ENCODE measurements at regions of chr2 and their contacts with region 1.

Region 1: DNA sequence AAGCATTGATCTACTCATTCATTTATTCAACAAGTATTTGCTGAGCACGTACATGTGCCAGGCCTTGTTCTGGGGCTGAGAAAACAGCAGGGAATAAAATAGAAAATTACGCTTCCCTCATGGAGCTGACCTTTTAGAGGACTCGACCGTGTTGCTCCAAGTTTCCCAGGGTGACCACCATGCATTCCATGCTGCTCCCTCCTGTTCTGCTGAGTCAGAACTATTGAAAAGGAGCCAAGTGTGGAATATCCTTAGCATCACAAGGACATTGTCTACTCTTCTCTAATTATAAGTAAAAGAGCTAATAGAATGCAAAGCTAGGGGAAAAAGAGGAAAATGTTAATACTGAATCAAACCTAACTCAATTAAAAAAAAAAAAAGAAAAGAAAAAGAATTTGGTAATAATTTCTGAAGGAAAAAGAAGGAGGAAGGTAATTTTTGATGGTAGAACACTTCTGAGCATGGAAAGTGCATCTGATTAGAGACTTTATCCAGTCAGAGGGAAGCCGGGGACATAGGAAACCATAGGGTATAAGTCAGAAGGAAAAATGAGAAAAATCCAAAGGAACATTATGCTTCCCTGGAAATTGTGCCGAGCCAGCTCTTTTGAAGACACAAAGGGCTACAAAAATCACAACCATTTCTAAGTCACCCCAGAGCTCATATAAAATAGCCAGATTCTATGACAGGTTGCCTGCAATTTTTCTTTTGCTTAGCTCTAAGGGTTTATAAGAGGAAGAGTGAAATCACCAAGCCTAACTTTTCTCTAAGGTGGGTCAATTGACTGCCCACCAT is 339.4 kb downstream of the RND3 start:
- DNase-seq: no peak
- H3K4me3 ChIP-seq: no peak overlapping the region
- CTCF ChIP-seq: no peak
- POLR2A ChIP-seq: no peak

Region 2: GRCh38 chr2:150188177-150188576 is 40.1 kb after region 1 on chr2:
- intact Hi-C with region 1: loop called (anchors 2 kb)
- DNase-seq: no peak
- H3K4me3 ChIP-seq: no peak overlapping the region
- CTCF ChIP-seq: no peak
- POLR2A ChIP-seq: no peak